ENCODE measurements at regions of chr11 and their contacts with region 1.

Region 1: DNA sequence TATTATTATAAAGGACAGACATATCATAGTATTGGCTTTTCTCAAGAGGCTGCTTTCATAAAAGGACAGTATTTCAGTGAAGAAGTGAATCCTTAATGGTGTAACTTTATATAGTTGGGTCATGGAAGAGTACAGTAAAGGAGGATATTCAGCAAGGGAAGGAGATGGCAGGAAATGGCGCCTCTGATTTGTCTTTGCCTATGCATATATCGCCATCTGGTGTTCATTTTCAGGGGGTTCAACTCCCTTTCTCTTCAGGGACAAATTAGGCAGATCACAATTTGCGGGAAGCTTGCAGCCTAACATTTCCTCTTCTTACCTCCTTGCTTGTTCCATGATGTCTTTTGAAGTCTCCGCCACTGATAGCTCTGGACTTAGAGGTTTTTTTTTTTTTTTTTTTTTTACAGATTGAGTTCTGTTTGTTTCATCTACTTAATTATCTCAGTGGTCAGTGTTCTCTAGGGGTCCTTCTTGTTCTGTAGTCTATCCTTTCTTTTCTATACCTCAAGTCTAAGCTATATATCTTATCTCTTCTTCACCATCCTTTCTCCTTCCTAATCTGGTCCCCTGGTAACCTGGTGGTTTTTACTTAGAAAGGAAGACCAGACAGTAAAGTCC is 21.8 kb upstream of the RRM1 start:
- DNase-seq: peak; percentile 68
- ATAC-seq: peak; percentile 71
- H3K4me3 Mint-ChIP-seq: no peak overlapping the region
- H3K27ac Mint-ChIP-seq: no peak overlapping the region
- H3K4me1 Mint-ChIP-seq: peaks cover 25% of the 10 kb centered on the region
- H3K27me3 Mint-ChIP-seq: no peaks in the 10 kb centered on the region

Region 2: DNA sequence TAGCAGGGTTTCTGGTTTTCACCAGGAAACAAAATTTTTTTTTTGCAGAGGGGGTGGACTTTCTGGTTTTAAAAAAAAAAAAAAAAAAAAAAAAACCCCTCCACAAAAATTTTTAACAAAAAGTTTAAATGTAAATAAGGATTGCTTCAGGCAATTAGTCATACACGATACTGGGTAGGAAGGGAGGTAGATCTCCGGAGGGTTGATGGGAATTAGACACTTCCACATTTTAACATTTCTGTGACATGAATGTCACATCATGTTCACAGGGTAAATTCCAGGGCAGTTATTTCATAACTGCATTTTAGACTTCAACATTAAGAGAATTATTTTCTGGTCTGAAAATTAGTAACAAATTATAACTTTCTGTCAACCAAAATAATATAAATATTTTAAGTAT is 291.4 kb before region 1 on chr11:
- CTCF ChIA-PET with region 1: interaction called, 10 read pairs
- POLR2A ChIA-PET with region 1: no interaction called
- DNase-seq: no peak
- ATAC-seq: no peak
- H3K4me3 Mint-ChIP-seq: no peak overlapping the region
- H3K27ac Mint-ChIP-seq: peak overlapping the region; percentile 10
- H3K4me1 Mint-ChIP-seq: peaks cover 46% of the 10 kb centered on the region
- H3K27me3 Mint-ChIP-seq: no peaks in the 10 kb centered on the region

Region 3: DNA sequence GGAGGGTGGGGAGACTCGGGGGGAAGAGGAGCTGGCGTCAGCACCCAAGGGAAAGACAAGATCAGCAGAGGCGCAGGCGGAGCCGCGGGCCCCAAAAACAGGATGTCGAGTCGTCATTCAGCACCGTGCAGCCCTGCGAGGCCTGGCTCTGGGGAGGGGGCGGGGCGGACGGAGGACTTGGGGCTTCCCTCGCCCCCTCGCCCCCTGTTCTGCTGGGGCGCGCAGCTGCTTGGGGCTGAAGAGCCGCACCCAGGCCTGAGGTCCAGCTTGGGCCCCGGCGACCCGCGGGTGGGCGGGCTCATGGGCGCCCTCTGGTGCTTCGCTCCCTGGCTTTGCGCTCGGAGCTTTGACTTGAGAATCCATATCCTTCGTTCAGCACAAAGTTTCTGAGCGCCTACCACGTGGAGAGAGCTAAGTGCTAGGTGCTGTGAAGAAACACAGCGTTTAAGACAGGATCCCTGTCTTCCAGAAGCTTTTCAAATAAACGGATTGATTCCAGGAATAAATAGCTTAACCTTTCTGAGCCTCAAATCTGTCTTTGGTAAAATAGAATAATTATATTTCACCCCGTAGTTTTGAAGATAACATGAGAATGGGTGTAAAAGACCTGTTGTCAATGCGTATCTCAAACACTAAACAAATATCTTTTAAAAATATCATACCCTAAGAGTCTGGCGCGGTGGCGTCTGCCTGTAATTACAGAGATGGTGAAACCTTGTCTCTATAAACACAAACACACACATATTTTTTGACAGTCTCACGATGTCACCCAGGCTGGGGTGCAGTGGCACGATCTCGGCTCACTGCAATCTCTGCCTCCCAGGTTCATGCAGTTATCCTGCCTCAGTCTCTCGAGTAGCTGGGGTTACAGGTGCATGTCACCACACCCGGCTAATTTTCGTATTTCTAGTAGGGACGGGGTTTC is 231.1 kb before region 1 on chr11:
- CTCF ChIA-PET with region 1: interaction called, 630 read pairs
- POLR2A ChIA-PET with region 1: interaction called, 9 read pairs
- DNase-seq: peak; percentile 94
- ATAC-seq: peak; percentile 71
- H3K4me3 Mint-ChIP-seq: peak overlapping the region; percentile 81
- H3K27ac Mint-ChIP-seq: peak overlapping the region; percentile 99
- H3K4me1 Mint-ChIP-seq: peaks cover 51% of the 10 kb centered on the region
- H3K27me3 Mint-ChIP-seq: no peaks in the 10 kb centered on the region

Region 4: GRCh38 chr11:3929649-3930048 is 143.1 kb before region 1 on chr11:
- CTCF ChIA-PET with region 1: interaction called, 17 read pairs
- POLR2A ChIA-PET with region 1: no interaction called
- DNase-seq: no peak
- ATAC-seq: no peak
- H3K4me3 Mint-ChIP-seq: no peak overlapping the region
- H3K27ac Mint-ChIP-seq: peak overlapping the region; percentile 18
- H3K4me1 Mint-ChIP-seq: peaks cover 38% of the 10 kb centered on the region
- H3K27me3 Mint-ChIP-seq: no peaks in the 10 kb centered on the region

Region 5: DNA sequence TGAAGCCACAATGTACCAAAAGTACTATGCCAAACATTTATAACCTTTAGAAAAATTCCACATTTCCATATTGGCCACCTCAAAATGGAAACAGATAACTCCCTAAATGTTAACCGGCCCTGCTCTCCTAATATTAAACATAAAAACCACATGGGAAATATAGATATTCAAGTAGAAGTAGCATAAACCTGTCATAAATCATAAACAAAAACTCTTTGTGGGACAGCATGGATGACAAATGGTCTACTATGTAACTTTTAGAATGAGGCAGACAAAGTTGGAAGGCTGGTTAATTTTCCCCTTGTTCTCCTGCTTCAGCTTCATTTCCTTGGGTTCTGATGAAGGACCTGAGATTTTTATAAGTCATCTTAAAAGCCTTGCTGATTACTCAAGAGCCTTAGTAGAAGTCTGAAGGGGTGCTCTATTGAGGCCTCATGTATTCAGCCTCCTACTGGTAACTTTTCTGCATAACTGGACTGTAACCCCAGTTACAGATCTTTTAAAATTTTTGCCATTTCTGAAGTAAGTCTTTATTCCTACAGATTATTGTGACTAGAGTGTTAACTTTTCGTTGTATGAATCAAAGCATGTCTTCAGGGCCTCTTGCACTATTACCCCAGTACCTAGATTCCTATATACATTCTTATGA is 100.9 kb before region 1 on chr11:
- CTCF ChIA-PET with region 1: interaction called, 14 read pairs
- POLR2A ChIA-PET with region 1: no interaction called
- DNase-seq: no peak
- ATAC-seq: no peak
- H3K4me3 Mint-ChIP-seq: no peak overlapping the region
- H3K27ac Mint-ChIP-seq: no peak overlapping the region
- H3K4me1 Mint-ChIP-seq: peaks cover 53% of the 10 kb centered on the region
- H3K27me3 Mint-ChIP-seq: no peaks in the 10 kb centered on the region

Region 6: DNA sequence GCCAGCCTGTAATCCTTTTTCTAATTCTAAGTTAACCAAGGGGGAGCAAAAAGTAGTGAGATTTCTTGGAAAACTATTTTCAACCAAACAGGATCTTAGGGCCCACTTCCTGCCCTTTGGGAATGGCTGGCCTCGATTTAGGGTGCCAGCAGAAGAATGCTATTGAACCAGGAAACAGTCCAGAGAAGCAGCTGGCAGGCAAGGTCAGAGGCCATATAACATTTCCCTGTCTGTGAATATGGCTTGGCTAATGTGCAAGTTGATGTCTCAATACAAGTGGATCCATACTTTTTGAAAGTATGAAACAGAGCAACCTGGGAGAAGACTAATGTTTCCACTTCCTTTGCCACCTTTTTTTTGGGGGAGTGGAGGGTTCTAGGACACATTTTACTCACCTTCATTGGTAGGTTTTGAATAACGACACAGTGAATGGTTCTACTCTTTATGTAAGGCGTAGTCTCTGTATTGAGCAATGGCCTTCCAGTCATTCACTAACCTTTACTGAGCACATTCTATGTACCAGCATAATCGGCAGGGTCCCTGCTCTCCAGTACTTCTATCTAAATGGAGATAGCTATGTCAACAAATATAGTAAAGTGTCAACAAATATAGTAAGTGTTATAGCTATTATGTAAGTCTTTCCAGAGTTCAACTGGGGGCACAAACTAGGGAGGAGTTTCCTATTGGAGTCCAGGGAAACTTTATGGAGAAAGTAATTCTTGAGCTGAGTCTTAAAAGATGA is 12.4 kb before region 1 on chr11:
- CTCF ChIA-PET with region 1: interaction called, 32 read pairs
- POLR2A ChIA-PET with region 1: interaction called, 3 read pairs
- DNase-seq: no peak
- ATAC-seq: no peak
- H3K4me3 Mint-ChIP-seq: no peak overlapping the region
- H3K27ac Mint-ChIP-seq: no peak overlapping the region
- H3K4me1 Mint-ChIP-seq: peaks cover 38% of the 10 kb centered on the region
- H3K27me3 Mint-ChIP-seq: no peaks in the 10 kb centered on the region

Region 7: GRCh38 chr11:4118107-4118506 is 45.3 kb after region 1 on chr11:
- CTCF ChIA-PET with region 1: no interaction called
- POLR2A ChIA-PET with region 1: no interaction called
- DNase-seq: no peak
- ATAC-seq: no peak
- H3K4me3 Mint-ChIP-seq: no peak overlapping the region
- H3K27ac Mint-ChIP-seq: no peak overlapping the region
- H3K4me1 Mint-ChIP-seq: peaks cover 6% of the 10 kb centered on the region
- H3K27me3 Mint-ChIP-seq: no peaks in the 10 kb centered on the region

Measured in activated CD8-positive, alpha-beta T cell treated with anti-CD3 and anti-CD28 coated beads, Interleukin-2, amount 10 ng/mL, durations not matched to agents 7 days and 5 days (primary cell).